ENCODE measurements at regions of chr16 and their contacts with region 1.

Region 1: GRCh38 chr16:2919511-2920255 is 8.0 kb downstream of the FLYWCH1 start:
- DNase-seq: peak in 1 of 6 donors; percentile 71
- ATAC-seq: peak; percentile 62 to 93 (median 88)
- H3K4me3 ChIP-seq: no peak overlapping the region
- H3K27ac ChIP-seq: no peak overlapping the region
- H3K4me1 ChIP-seq: no peaks in the 10 kb centered on the region
- H3K27me3 ChIP-seq: no peaks in the 10 kb centered on the region
- CTCF ChIP-seq: peak; percentile 65 to 95 (median 82)

Region 2: GRCh38 chr16:2874912-2875362 is 44.7 kb before region 1 on chr16:
- intact Hi-C with region 1: loop called in 1 of 3 experiments (anchors 5 kb)
- DNase-seq: peak; percentile 65 to 91 (median 82)
- ATAC-seq: peak; percentile 99 to 100 (median 100)
- H3K4me3 ChIP-seq: no peak overlapping the region
- H3K27ac ChIP-seq: no peak overlapping the region
- H3K4me1 ChIP-seq: no peaks in the 10 kb centered on the region
- H3K27me3 ChIP-seq: peaks cover 0 to 5% (median 0%) of the 10 kb centered on the region in 4 donors
- CTCF ChIP-seq: peak; percentile 92 to 97 (median 95)

Region 3: GRCh38 chr16:2980227-2981086 is 60.8 kb after region 1 on chr16 and contains the start of gene PKMYT1:
- intact Hi-C with region 1: loop called in 1 of 3 experiments (anchors 5 kb)
- DNase-seq: peak; percentile 87 to 99 (median 94)
- ATAC-seq: peak; percentile 84 to 92 (median 90)
- H3K4me3 ChIP-seq: peak within 1 kb of the TSS; percentile 42 to 79 (median 71)
- H3K27ac ChIP-seq: peak within 1 kb of the TSS; percentile 79 to 88 (median 84)
- H3K4me1 ChIP-seq: peaks cover 22 to 54% (median 29%) of the 10 kb centered on the region in 3 donors
- H3K27me3 ChIP-seq: no peaks in the 10 kb centered on the region
- CTCF ChIP-seq: no peak
- total RNA-seq, gene PKMYT1: 0.28 to 1.7 (median 1.1) TPM

Region 4: GRCh38 chr16:3021449-3022207 is 101.9 kb after region 1 on chr16:
- intact Hi-C with region 1: no loop called
- DNase-seq: peak; percentile 83 to 92 (median 84)
- ATAC-seq: peak; percentile 30 to 59 (median 44)
- H3K4me3 ChIP-seq: peak overlapping the region; percentile 63 to 93 (median 76)
- H3K27ac ChIP-seq: peak overlapping the region; percentile 97 to 100 (median 98)
- H3K4me1 ChIP-seq: peaks cover 15 to 32% (median 25%) of the 10 kb centered on the region in 3 donors
- H3K27me3 ChIP-seq: no peaks in the 10 kb centered on the region
- CTCF ChIP-seq: peak in 3 of 4 donors; percentile 1 to 19 (median 15)